Activated naive CD4-positive, alpha-beta T cell treated with anti-CD3 and anti-CD28 coated beads for 36 hours (primary cell): ENCODE measurements at regions of chr19 and their contacts with region 1.

Region 1: GRCh38 chr19:32224371-32225244 is 120.8 kb upstream of the ZNF507 start:
- DNase-seq: peak; percentile 54
- H3K4me3 Mint-ChIP-seq: peak overlapping the region; percentile 62
- H3K27ac Mint-ChIP-seq: no peak overlapping the region
- H3K4me1 Mint-ChIP-seq: peaks cover 14% of the 10 kb centered on the region
- H3K27me3 Mint-ChIP-seq: peaks cover 36% of the 10 kb centered on the region

Region 2: GRCh38 chr19:30669329-30670010 is 1555.1 kb before region 1 on chr19:
- CTCF ChIA-PET with region 1: interaction called, 15 read pairs
- intact Hi-C with region 1: loop called (anchors 5 kb)
- DNase-seq: peak; percentile 61
- H3K4me3 Mint-ChIP-seq: no peak overlapping the region
- H3K27ac Mint-ChIP-seq: no peak overlapping the region
- H3K4me1 Mint-ChIP-seq: no peaks in the 10 kb centered on the region
- H3K27me3 Mint-ChIP-seq: peaks cover 34% of the 10 kb centered on the region

Region 3: GRCh38 chr19:30784850-30785457 is 1439.7 kb before region 1 on chr19:
- CTCF ChIA-PET with region 1: interaction called, 9 read pairs
- intact Hi-C with region 1: loop called (anchors 2 kb)
- DNase-seq: peak; percentile 72
- H3K4me3 Mint-ChIP-seq: no peak overlapping the region
- H3K27ac Mint-ChIP-seq: no peak overlapping the region
- H3K4me1 Mint-ChIP-seq: no peaks in the 10 kb centered on the region
- H3K27me3 Mint-ChIP-seq: peaks cover 16% of the 10 kb centered on the region

Region 4: GRCh38 chr19:31214086-31214485 is 1010.5 kb before region 1 on chr19:
- CTCF ChIA-PET with region 1: no interaction called
- intact Hi-C with region 1: loop called (anchors 1 kb)
- DNase-seq: peak; percentile 97
- H3K4me3 Mint-ChIP-seq: peak overlapping the region; percentile 60
- H3K27ac Mint-ChIP-seq: peak overlapping the region; percentile 99
- H3K4me1 Mint-ChIP-seq: peaks cover 40% of the 10 kb centered on the region
- H3K27me3 Mint-ChIP-seq: no peaks in the 10 kb centered on the region

Region 5: DNA sequence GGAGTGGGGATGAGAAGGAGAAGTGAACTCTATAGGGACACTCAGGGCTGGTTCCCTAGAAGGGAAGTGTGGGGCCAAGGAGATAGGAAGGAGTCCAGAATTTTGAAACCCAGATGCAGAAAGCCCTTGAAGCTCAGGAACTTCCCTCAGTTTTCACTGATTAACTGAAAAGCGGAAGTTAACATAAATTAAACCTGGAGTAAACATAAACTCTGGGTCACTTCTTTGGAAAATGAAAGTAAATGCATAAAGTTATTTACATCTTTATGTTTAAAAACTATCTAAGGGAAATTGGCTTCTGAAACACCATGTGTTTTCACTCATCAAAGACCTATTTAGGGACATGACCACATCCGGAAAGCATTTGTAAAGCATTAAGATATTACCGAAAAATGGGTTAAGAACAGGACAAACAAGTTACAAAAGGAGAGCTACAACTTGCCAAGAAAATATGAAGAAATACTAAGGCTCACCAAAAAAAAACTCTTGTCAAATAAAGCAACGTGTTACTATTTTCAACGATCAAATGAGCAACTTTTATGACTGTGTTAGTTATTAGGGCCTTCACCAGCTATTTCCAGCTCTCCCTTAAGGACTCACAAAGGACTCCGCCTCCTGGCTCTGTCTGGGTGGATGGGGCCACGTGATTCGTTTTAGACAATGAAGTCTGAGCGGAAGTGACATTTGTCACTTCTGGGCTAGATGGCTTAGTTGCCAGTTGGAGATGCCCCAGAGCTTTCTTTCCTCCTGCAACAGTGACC is 318.3 kb before region 1 on chr19:
- CTCF ChIA-PET with region 1: no interaction called
- intact Hi-C with region 1: no loop called
- DNase-seq: no peak
- H3K4me3 Mint-ChIP-seq: no peak overlapping the region
- H3K27ac Mint-ChIP-seq: no peak overlapping the region
- H3K4me1 Mint-ChIP-seq: no peaks in the 10 kb centered on the region
- H3K27me3 Mint-ChIP-seq: no peaks in the 10 kb centered on the region

Region 6: GRCh38 chr19:32201636-32202051 is 23.0 kb before region 1 on chr19:
- CTCF ChIA-PET with region 1: interaction called, 5 read pairs
- intact Hi-C with region 1: loop called (anchors 1 kb)
- DNase-seq: peak; percentile 55
- H3K4me3 Mint-ChIP-seq: no peak overlapping the region
- H3K27ac Mint-ChIP-seq: no peak overlapping the region
- H3K4me1 Mint-ChIP-seq: peaks cover 6% of the 10 kb centered on the region
- H3K27me3 Mint-ChIP-seq: peaks cover 18% of the 10 kb centered on the region